ENCODE measurements at regions of chr19 and their contacts with region 1.

Region 1: DNA sequence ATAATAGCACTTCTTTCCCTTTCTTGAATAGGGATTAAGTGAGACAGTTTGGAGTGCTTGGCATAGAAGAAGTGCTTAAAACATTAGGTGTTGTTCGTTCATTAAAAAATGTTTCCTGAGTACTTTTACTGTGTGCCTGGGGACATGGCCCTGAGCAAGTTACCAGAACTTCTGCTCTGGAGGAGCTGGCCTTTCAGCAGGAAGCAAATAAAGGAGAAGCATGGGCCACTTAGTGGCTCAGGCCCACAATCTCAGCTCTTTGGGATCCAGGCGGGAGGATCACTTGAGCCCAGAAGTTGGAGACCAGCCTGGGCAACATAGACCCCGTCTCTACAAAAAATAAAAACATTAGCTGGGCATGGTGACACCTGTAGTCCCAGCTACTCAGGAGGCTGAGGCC is 5.7 kb downstream of the DNM2 start:
- DNase-seq: no peak
- ATAC-seq: no peak
- H3K4me3 ChIP-seq: no peak overlapping the region
- H3K27ac ChIP-seq: no peak overlapping the region
- H3K4me1 ChIP-seq: peaks cover 27% of the 10 kb centered on the region
- H3K27me3 ChIP-seq: no peaks in the 10 kb centered on the region

Region 2: GRCh38 chr19:10543420-10544241 is 180.0 kb before region 1 on chr19 and contains the start of gene ATG4D:
- intact Hi-C with region 1: no loop called
- DNase-seq: peak; percentile 81 to 92 (median 92)
- ATAC-seq: peak; percentile 91
- H3K4me3 ChIP-seq: peak within 1 kb of the TSS; percentile 94
- H3K27ac ChIP-seq: peak within 1 kb of the TSS; percentile 65
- H3K4me1 ChIP-seq: peaks cover 6% of the 10 kb centered on the region
- H3K27me3 ChIP-seq: no peaks in the 10 kb centered on the region
- total RNA-seq, gene ATG4D: 45.1 to 54.0 (median 48.9) TPM

Region 3: DNA sequence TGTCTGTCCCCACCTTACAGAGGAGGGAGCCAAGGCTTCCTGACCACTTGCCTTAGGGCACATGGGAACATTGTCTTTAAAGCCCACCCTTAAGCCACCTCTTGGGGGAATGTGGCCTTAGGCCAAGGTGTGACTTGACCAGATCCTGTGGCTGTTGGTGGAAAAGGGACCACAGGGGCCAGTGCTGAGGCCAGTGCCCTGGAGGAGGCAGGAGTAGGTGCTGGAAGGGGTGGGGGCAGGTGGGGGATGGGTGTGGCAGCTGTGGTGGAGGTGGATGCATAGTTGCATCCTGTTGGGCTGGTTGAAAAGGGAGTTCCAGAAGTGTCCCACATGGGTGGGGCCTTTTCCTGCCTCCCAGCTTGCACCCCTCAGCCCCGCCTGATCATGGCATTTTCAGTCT is 39.1 kb after region 1 on chr19:
- intact Hi-C with region 1: loop called (anchors 2 to 5 kb)
- DNase-seq: peak; percentile 53 to 68 (median 63)
- ATAC-seq: peak; percentile 4 to 65
- H3K4me3 ChIP-seq: no peak overlapping the region
- H3K27ac ChIP-seq: peak overlapping the region; percentile 32
- H3K4me1 ChIP-seq: peaks cover 26% of the 10 kb centered on the region
- H3K27me3 ChIP-seq: no peaks in the 10 kb centered on the region

Measured in right cardiac atrium (tissue), 5 donors.